ENCODE measurements at regions of chr1 and their contacts with region 1.

Region 1: DNA sequence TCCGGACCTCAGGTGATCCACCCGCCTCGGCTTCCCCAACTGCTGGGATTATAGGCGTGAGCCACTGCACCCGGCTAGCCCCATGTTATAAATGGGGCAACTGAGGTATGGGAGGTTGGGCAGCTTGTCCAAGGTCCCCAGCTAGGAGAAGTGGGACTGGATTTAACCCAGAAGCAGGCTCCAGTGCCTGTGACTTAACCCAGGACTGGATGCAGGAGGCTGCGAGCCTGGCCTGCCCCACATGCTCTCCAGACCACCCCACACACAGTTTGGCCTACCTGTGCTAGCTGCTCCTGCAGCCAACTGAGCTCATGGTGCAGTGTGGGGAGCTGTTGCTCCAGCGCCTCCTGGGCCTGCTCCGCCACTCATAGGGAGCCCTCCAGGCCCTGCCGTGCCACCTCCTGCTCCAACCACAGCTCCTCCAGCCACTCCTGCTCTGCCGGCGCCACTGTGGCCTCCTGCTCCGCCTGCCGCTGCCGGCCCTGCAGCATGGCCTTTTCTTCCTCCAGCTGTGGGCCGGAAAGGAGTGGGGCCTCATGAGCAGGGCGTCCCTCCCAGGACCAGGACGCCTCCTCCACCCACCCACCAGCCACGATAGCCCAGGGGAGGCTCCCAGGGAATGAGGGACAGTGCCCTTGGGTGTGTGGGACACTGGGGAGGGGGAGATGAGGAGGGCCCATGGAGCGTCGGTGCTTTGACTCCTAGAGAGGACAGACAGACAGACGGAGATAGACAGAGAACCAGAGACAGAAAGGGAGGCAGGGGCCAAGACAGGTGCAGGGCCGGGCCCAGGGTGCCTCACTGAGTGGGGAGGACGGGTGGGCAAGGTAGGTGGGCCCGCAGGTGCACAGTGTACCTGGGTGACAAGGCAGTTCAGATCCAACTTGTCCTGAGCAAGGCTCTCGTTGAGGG is 12.4 kb upstream of the NBPF1 start:
- DNase-seq: no peak
- H3K4me3 ChIP-seq: no peak overlapping the region
- H3K27ac ChIP-seq: no peak overlapping the region
- H3K4me1 ChIP-seq: peaks cover 0 to 5% (median 0%) of the 10 kb centered on the region in 4 experiments
- H3K27me3 ChIP-seq: no peaks in the 10 kb centered on the region

Region 2: GRCh38 chr1:16613185-16614147 is 12.3 kb before region 1 on chr1 and contains the start of gene NBPF1:
- CTCF ChIA-PET with region 1: interaction called, 104 read pairs
- POLR2A ChIA-PET with region 1: no interaction called
- DNase-seq: peak; percentile 90 to 94 (median 92)
- H3K4me3 ChIP-seq: peak within 1 kb of the TSS; percentile 62 to 98 (median 87)
- H3K27ac ChIP-seq: peak within 1 kb of the TSS in 1 of 2 experiments; percentile 59
- H3K4me1 ChIP-seq: peaks cover 4 to 28% (median 26%) of the 10 kb centered on the region in 4 experiments
- H3K27me3 ChIP-seq: peaks cover 0 to 11% (median 6%) of the 10 kb centered on the region in 5 experiments

Region 3: GRCh38 chr1:16644193-16644481 is 18.4 kb after region 1 on chr1:
- CTCF ChIA-PET with region 1: interaction called, 15 read pairs
- POLR2A ChIA-PET with region 1: interaction called, 4 read pairs
- DNase-seq: no peak
- H3K4me3 ChIP-seq: peak overlapping the region; percentile 68 to 100 (median 96)
- H3K27ac ChIP-seq: peak overlapping the region; percentile 81 to 94
- H3K4me1 ChIP-seq: peaks cover 7 to 31% (median 28%) of the 10 kb centered on the region in 4 experiments
- H3K27me3 ChIP-seq: peaks cover 0 to 9% (median 5%) of the 10 kb centered on the region in 5 experiments